Endothelial cell of umbilical vein (primary cell): ENCODE measurements at regions of chr1 and their contacts with region 1.

Region 1: GRCh38 chr1:108828022-108828961 is 28.6 kb downstream of the AKNAD1 start:
- DNase-seq: peak; percentile 70
- H3K4me3 ChIP-seq: no peak overlapping the region
- H3K27ac ChIP-seq: no peak overlapping the region
- H3K4me1 ChIP-seq: peaks cover 29% of the 10 kb centered on the region
- H3K27me3 ChIP-seq: peaks cover 0 to under 1% of the 10 kb centered on the region in 2 experiments
- CTCF ChIP-seq: peak; percentile 64 to 74
- POLR2A ChIP-seq: no peak

Region 2: GRCh38 chr1:108590957-108591356 is 237.3 kb before region 1 on chr1:
- CTCF ChIA-PET with region 1: no interaction called
- POLR2A ChIA-PET with region 1: no interaction called
- dilution Hi-C with region 1: no loop called
- intact Hi-C with region 1: loop called (anchors 5 kb)
- DNase-seq: peak; percentile 97
- H3K4me3 ChIP-seq: peak overlapping the region in 1 of 3 experiments; percentile 31
- H3K27ac ChIP-seq: peak overlapping the region; percentile 94
- H3K4me1 ChIP-seq: peaks cover 39% of the 10 kb centered on the region
- H3K27me3 ChIP-seq: no peaks in the 10 kb centered on the region
- CTCF ChIP-seq: no peak
- POLR2A ChIP-seq: no peak

Region 3: GRCh38 chr1:108746372-108747205 is 81.7 kb before region 1 on chr1 and contains the start of gene STXBP3:
- CTCF ChIA-PET with region 1: no interaction called
- POLR2A ChIA-PET with region 1: no interaction called
- dilution Hi-C with region 1: no loop called
- intact Hi-C with region 1: loop called (anchors 1 kb)
- DNase-seq: peak; percentile 99
- H3K4me3 ChIP-seq: peak within 1 kb of the TSS; percentile 67 to 95 (median 93)
- H3K27ac ChIP-seq: peak within 1 kb of the TSS; percentile 89
- H3K4me1 ChIP-seq: peaks cover 15% of the 10 kb centered on the region
- H3K27me3 ChIP-seq: peaks cover 4 to 6% of the 10 kb centered on the region in 2 experiments
- CTCF ChIP-seq: peak; percentile 98 to 100
- POLR2A ChIP-seq: peak; percentile 97
- total RNA-seq, gene STXBP3: 37.2 and 44.1 TPM in 2 replicates

Region 4: DNA sequence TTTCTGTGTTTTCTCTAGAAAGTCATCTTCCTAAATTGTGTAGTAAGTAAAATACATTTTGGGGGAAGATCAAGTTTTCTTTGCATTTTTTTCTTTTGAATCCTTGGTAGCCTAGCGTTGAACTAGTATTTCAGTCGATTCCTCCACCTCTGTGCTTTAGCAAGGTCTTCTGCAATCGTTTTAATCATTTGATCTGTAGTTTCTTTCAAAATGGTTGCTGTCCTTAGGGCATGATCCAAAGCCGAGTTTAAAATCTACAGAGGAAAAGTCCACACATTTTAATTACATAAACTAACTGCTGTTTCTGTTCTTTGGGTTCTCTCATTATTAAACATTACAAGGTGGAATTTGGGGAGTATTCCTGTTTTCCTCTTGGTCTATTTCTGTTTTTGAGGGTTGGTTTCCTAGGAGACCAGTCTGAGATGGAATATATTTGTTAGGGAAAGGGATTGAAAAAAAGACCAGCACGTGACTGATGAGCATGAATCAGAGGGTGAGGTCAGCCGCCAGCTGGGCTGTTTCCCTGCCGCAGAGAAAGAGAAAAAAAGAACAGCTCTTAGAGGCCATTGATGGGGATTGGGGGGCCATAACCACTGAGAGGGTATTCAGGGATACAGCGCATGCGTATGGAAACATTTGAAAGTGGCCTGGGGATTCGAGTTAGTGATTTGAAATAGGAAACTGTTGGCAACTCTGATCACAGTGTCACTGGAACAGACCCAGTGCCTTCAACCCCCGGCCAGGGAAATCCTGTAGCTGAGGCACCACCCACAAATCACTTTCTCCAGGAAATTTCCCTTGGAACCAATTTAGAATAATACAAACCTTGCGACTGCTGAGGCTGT is 12.0 kb before region 1 on chr1:
- CTCF ChIA-PET with region 1: interaction called, 35 read pairs
- POLR2A ChIA-PET with region 1: interaction called, 8 read pairs
- dilution Hi-C with region 1: no loop called
- intact Hi-C with region 1: loop called (anchors 1 kb)
- DNase-seq: peak; percentile 98
- H3K4me3 ChIP-seq: peak overlapping the region in 1 of 3 experiments; percentile 17
- H3K27ac ChIP-seq: peak overlapping the region; percentile 91
- H3K4me1 ChIP-seq: peaks cover 12% of the 10 kb centered on the region
- H3K27me3 ChIP-seq: no peaks in the 10 kb centered on the region
- CTCF ChIP-seq: no peak
- POLR2A ChIP-seq: peak; percentile 42

Region 5: DNA sequence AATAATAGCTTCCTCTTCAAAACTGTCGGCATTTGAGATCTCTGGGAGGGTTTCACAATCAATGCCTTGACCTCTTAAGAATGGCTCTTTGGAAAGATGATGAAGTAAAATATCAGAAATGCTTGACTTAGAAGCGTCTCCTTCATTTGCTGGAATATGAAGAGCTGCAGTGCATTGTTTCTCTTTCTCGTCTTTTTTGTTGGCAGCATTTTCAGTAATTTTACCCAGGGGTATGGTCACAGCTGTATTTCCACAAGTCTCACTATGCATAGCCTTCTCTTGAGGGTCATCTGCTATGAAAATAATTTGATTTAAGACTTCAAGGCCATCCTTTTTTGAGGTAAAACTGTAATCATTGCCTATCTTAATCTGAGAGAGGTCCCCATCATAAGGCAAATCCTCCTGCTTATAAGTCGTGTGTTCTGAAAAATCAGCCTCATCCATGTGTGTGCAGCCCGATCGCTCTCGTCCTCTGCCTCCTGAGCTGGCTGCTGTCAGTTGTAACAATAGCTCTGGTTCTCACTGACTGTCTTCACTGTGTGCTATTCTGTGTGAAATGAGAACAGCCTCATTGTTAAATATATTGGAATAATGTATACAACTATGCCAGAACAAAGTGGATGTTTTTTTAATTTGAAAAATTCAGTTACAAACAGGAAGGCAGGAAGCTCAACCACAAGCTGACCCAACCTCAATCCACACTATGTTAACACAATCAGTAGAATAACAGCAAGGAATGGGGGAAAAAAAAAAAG is 24.1 kb after region 1 on chr1:
- CTCF ChIA-PET with region 1: interaction called, 9 read pairs
- POLR2A ChIA-PET with region 1: no interaction called
- dilution Hi-C with region 1: no loop called
- intact Hi-C with region 1: loop called (anchors 2 kb)
- DNase-seq: peak; percentile 39
- H3K4me3 ChIP-seq: no peak overlapping the region
- H3K27ac ChIP-seq: no peak overlapping the region
- H3K4me1 ChIP-seq: no peaks in the 10 kb centered on the region
- H3K27me3 ChIP-seq: peaks cover 15 to 27% of the 10 kb centered on the region in 2 experiments
- CTCF ChIP-seq: no peak
- POLR2A ChIP-seq: no peak

Region 6: GRCh38 chr1:108877348-108878159 is 49.3 kb after region 1 on chr1:
- CTCF ChIA-PET with region 1: interaction called, 13 read pairs
- POLR2A ChIA-PET with region 1: no interaction called
- dilution Hi-C with region 1: no loop called
- intact Hi-C with region 1: loop called (anchors 1 kb)
- DNase-seq: peak; percentile 55
- H3K4me3 ChIP-seq: peak overlapping the region; percentile 90 to 99 (median 93)
- H3K27ac ChIP-seq: peak overlapping the region; percentile 13
- H3K4me1 ChIP-seq: peaks cover 11% of the 10 kb centered on the region
- H3K27me3 ChIP-seq: no peaks in the 10 kb centered on the region
- CTCF ChIP-seq: no peak
- POLR2A ChIP-seq: no peak

Region 7: DNA sequence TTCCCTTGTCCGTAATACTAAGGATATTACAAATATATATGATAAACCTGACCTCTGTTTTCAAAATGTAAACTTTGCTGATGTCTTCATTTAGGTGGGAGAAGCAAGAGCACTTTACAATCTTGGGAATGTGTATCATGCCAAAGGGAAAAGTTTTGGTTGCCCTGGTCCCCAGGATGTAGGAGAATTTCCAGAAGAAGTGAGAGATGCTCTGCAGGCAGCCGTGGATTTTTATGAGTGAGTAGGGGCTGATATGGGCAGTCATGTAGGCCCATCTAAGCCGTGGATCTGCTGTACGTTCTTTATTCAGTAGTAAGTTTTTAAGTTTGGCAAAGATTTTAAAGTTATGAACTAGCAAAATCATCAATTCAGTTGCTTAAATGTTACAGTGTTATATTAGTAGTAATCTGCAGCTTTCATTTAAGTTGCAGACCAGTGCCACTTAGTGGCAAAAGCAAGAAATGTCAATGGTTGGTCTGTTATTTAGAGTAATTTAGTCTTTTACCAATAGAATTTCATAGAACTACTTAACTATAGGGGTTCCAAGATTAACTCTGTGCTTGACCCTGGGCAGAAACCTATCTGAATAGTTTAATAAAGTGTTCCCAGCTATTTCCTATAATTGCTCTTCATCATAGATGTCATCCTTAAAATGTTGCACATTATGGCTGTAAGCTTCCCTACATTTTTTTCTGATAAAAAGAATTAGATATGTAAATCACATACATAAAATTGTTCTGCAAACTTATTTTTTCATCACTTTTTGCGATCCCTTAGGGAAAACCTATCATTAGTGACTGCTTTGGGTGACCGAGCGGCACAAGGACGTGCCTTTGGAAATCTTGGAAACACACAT is 69.8 kb after region 1 on chr1:
- CTCF ChIA-PET with region 1: interaction called, 247 read pairs
- POLR2A ChIA-PET with region 1: no interaction called
- dilution Hi-C with region 1: no loop called
- intact Hi-C with region 1: loop called (anchors 1 kb)
- DNase-seq: peak; percentile 66
- H3K4me3 ChIP-seq: no peak overlapping the region
- H3K27ac ChIP-seq: no peak overlapping the region
- H3K4me1 ChIP-seq: peaks cover 4% of the 10 kb centered on the region
- H3K27me3 ChIP-seq: no peaks in the 10 kb centered on the region
- CTCF ChIP-seq: peak; percentile 36 to 45
- POLR2A ChIP-seq: no peak

Region 8: DNA sequence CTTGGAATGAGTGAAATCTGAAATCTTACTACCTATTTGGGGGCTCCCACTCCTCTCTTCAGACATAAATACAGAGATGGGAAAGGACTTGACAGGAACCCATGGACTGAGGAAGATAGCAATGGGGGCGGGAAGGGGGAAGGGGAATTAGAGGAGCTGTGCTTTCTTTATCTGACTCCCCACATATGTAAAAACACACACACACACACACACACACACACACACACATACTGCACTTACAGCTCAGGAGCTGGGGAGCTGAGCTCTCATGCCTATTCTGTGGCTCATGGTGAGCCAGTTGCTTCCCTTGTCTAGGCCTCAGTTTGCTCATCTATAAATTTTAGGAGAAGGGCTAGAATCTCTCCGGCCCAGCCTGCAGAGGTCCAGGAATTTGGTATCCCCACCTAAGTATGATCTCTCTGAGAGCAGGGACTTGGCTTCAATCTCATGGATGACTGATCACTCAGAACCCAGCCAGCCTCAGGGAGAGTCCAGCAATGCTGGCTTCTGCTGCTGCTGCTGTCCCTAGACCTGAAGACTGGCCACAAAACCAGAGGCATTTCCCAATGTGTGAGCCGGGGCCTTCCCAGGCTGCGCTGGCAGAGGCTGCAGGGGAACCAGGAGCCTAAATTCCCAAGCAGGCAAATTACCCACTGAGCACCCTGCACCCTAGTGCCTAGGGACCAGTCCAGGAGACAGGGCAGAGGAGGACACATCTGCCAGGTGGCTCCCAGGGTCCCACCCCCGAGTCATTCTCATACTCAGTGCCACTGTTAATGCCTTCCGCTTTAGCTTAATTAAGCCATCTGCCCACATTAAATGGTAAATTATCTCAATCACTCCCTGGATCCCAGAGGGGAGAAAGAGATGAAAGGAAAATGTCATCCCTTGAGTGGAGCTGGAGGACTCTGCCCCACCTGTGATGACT is 1453.3 kb after region 1 on chr1:
- CTCF ChIA-PET with region 1: no interaction called
- POLR2A ChIA-PET with region 1: no interaction called
- dilution Hi-C with region 1: no loop called
- intact Hi-C with region 1: no loop called
- DNase-seq: no peak
- H3K4me3 ChIP-seq: no peak overlapping the region
- H3K27ac ChIP-seq: no peak overlapping the region
- H3K4me1 ChIP-seq: no peaks in the 10 kb centered on the region
- H3K27me3 ChIP-seq: peaks cover 6 to 7% of the 10 kb centered on the region in 2 experiments
- CTCF ChIP-seq: no peak
- POLR2A ChIP-seq: no peak